Spleen (tissue), 13 donors: ENCODE measurements at regions of chr22 and their contacts with region 1.

Region 1: GRCh38 chr22:50150149-50151129 is 20.1 kb upstream of the PANX2 start:
- DNase-seq: no peak
- H3K4me3 ChIP-seq: no peak overlapping the region
- H3K27ac ChIP-seq: no peak overlapping the region
- H3K4me1 ChIP-seq: peaks cover 0 to 28% (median 9%) of the 10 kb centered on the region in 6 donors
- H3K27me3 ChIP-seq: peaks cover 0 to 23% (median 0%) of the 10 kb centered on the region in 7 donors
- CTCF ChIP-seq: no peak
- POLR2A ChIP-seq: no peak

Region 2: GRCh38 chr22:50209893-50210292 is 59.5 kb after region 1 on chr22:
- intact Hi-C with region 1: loop called (anchors 5 kb)
- DNase-seq: peak; percentile 87
- H3K4me3 ChIP-seq: no peak overlapping the region
- H3K27ac ChIP-seq: peak overlapping the region in 1 of 8 donors; percentile 8
- H3K4me1 ChIP-seq: peaks cover 3 to 60% (median 38%) of the 10 kb centered on the region in 6 donors
- H3K27me3 ChIP-seq: no peaks in the 10 kb centered on the region
- CTCF ChIP-seq: peak; percentile 78 to 91 (median 85)
- POLR2A ChIP-seq: no peak